ENCODE measurements at regions of chr15 and their contacts with region 1.

Region 1: GRCh38 chr15:45573961-45574629 is 13.1 kb upstream of the BLOC1S6 start:
- DNase-seq: no peak
- H3K4me3 ChIP-seq: no peak overlapping the region
- H3K27ac ChIP-seq: no peak overlapping the region
- H3K4me1 ChIP-seq: no peaks in the 10 kb centered on the region
- H3K27me3 ChIP-seq: no peaks in the 10 kb centered on the region
- CTCF ChIP-seq: no peak
- POLR2A ChIP-seq: no peak

Region 2: DNA sequence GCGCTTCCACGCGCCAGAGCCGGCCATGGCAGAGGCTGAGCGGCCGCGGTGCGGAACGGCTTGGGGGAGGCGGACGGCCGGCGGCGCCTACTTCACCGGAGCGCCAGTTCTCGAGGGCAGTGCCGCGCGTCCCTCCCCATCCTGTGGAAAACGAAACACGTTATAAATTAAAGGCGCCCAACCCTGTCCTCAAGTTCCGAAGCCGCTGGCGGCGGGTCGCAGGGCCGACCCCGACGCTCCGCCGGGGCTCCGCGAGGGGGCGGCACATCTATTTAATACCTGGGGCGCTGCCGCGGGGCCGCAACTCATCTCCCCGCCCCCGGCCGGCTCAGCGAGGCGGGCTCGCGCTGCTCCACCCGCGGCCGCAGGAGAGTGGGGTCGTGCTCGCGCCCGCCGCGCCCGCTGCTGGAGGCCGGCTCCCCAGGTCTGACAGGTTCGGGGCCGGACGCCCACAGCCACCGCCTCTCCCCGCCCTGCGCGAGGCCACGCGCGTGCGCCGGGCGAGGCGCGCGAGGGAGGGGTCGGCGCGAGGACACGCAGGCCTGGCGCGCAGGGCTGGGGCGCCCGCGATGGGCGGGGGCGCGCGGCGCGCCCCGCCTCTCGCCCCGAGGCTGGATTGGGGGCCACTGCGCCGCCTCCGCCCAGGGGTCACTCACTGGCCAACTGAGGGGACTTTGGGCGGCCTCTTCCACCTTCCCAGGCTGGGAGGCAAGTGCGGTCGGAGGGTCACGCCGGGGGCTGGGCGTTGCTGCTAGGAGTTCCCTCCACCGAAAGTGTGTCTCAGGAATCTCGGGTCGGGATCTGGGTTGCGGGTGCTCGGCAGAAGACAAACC is 51.6 kb before region 1 on chr15 and contains the start of gene SLC30A4:
- intact Hi-C with region 1: loop called in 1 of 2 experiments (anchors 10 kb)
- DNase-seq: peak; percentile 63 to 76 (median 67)
- H3K4me3 ChIP-seq: peak within 1 kb of the TSS in 3 of 4 donors; percentile 71 to 96 (median 71)
- H3K27ac ChIP-seq: peak within 1 kb of the TSS; percentile 35 to 92 (median 77)
- H3K4me1 ChIP-seq: peaks cover 0 to 36% of the 10 kb centered on the region in 2 donors
- H3K27me3 ChIP-seq: no peaks in the 10 kb centered on the region
- CTCF ChIP-seq: peak in 4 of 6 experiments; percentile 23 to 47 (median 32)
- POLR2A ChIP-seq: peak; percentile 18 to 70
- total RNA-seq, gene SLC30A4: 4.7 to 10.6 (median 6.9) TPM

Measured in adrenal gland (tissue), 19 donors.